Activated CD4-positive, alpha-beta memory T cell treated with anti-CD3 and anti-CD28 coated beads, Interleukin-2, amount 10 ng/mL, durations not matched to agents 7 days and 5 days (primary cell): ENCODE measurements at regions of chr22 and their contacts with region 1.

Region 1: DNA sequence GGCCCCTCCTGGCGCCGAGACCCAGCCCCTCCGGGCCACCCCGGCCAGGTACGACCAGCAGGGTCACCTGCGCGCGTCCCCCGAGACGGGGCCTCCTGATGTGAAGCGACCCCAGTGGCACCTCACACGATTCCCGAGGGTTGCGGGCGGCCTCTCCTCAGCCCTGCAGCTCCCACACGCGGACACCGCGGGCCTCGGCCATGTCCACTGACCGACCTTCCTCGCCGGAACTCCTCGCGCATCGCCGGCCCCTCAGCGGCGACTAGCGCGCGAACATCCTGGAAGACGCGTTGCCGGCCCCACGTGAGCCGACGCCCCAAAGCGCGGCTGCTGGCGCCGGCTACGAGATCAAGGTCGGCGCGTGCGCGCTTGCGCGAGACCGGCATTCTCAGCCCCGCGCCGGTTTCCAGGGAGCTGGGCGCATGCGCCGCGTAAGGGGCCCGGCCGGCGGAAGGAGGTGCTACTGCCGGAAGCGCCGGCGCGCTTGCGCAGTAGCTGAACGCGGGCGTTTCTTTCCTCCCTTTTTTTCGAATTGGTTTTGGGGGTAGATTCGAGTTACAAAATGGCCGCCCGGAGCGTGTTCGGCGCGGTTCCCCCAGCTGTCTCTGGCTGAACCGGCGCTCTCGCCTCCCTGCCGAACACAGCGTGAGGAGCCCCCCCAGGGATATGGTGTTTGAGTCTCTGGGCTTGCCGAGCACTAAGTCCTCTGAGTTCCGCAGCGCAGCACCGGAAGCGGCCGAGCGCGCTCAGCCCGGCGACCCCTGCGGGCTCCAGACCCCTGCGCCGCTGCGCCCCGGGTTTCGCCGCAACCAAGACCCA is at the start of gene NUP50:
- DNase-seq: peak; percentile 97
- H3K4me3 Mint-ChIP-seq: peak within 1 kb of the TSS; percentile 88
- H3K27ac Mint-ChIP-seq: peak within 1 kb of the TSS; percentile 93
- H3K4me1 Mint-ChIP-seq: peaks cover 65% of the 10 kb centered on the region
- H3K27me3 Mint-ChIP-seq: no peaks in the 10 kb centered on the region
- total RNA-seq, gene NUP50: 160 to 167 TPM

Region 2: DNA sequence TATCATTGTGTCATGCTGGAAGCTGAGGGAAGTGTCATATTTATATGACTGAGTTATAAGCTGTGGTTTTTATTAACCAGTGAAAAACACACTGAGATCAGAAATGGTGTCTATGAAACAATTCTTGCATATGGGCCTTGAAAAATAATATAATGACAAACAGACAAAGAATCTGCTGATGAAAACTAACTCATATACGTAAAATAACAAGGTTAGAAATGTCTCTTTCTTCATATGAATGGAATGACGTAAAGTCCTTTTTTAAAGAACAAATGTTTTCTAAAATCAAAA is 105.1 kb before region 1 on chr22:
- CTCF ChIA-PET with region 1: no interaction called
- POLR2A ChIA-PET with region 1: no interaction called
- DNase-seq: no peak
- H3K4me3 Mint-ChIP-seq: no peak overlapping the region
- H3K27ac Mint-ChIP-seq: no peak overlapping the region
- H3K4me1 Mint-ChIP-seq: no peaks in the 10 kb centered on the region
- H3K27me3 Mint-ChIP-seq: peaks cover 2% of the 10 kb centered on the region

Region 3: DNA sequence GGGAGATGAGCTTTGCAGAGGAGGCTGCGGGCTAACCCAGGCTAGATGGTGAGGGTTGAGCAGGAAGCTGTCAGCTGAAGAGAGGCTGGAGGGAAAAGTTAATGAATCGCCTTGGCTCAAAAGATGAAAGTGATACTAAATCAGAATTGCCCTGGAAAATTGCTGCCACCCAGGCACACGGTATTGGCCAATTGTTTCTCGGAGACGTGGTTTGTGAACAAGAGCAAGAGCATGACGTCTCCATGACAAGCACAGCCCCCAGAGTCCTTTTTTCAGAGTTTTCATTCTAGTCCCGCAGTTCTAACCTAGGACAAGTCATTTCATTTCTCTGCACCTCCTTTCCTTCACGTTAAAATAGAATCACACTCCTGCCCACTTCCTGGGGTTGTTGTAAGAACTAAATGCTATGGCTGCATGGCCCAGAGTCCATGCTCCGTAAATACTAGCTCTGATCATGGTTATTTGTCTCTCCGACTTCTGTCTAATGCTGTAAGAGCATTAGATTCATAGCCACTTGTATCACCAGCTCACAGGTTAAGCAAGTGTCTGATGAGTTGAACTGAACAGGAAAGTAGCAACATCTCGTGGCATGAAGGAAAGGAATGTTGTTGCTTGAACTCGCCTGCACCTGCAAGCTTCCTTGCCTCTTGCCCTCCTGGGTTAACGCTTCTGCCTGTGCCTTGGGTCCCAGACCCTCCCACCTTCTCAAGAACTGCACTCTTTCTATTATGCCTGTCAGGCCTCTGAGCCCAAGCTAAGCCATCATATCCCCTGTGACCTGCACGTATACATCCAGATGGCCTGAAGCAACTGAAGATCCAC is 33.7 kb before region 1 on chr22:
- CTCF ChIA-PET with region 1: no interaction called
- POLR2A ChIA-PET with region 1: interaction called, 18 read pairs
- DNase-seq: peak; percentile 35
- H3K4me3 Mint-ChIP-seq: peak overlapping the region; percentile 50
- H3K27ac Mint-ChIP-seq: peak overlapping the region; percentile 85
- H3K4me1 Mint-ChIP-seq: peaks cover 29% of the 10 kb centered on the region
- H3K27me3 Mint-ChIP-seq: peaks cover 2% of the 10 kb centered on the region

Region 4: GRCh38 chr22:45413368-45414211 is 249.9 kb after region 1 on chr22 and contains the starts of genes RIBC2 and SMC1B:
- CTCF ChIA-PET with region 1: no interaction called
- POLR2A ChIA-PET with region 1: interaction called, 10 read pairs
- DNase-seq: peak; percentile 90
- H3K4me3 Mint-ChIP-seq: peak within 1 kb of the TSS; percentile 81
- H3K27ac Mint-ChIP-seq: peak within 1 kb of the TSS; percentile 62
- H3K4me1 Mint-ChIP-seq: peaks cover 23% of the 10 kb centered on the region
- H3K27me3 Mint-ChIP-seq: no peaks in the 10 kb centered on the region
- total RNA-seq, gene RIBC2: 7.3 to 7.8 TPM
- total RNA-seq, gene SMC1B: 0.50 to 0.81 TPM